ENCODE measurements at regions of chr11 and their contacts with region 1.

Region 1: DNA sequence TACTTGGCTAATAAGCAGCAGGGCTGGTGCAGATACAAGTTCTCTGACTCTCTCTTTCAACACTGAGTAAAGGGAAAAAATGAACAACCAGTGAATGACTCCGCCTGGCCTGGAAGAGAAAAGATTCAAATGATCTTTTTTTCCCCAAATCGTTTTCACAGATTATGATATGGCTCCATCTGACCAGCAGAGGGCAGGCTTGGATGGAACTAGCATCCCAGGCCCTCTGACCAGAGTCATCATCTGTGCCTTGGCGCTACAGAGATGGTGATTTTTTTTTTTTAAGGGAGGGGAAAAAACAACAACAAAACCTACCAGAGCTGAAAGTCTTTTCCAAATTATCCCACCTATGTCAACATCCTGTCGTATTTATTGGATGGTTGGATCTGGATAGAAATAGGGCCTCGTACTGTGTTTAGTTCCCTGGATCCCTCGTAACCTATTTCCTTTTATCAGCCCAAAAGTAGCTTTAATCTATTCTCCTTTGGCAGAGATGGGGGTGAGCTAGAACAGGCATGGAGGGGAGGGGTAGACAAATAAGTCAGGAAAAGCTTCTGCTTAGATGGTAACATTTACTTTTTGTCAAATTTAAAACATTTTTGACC is 69.7 kb downstream of the PRSS23 start:
- DNase-seq: no peak
- H3K4me3 ChIP-seq: no peak overlapping the region
- CTCF ChIP-seq: peak; percentile 76

Region 2: DNA sequence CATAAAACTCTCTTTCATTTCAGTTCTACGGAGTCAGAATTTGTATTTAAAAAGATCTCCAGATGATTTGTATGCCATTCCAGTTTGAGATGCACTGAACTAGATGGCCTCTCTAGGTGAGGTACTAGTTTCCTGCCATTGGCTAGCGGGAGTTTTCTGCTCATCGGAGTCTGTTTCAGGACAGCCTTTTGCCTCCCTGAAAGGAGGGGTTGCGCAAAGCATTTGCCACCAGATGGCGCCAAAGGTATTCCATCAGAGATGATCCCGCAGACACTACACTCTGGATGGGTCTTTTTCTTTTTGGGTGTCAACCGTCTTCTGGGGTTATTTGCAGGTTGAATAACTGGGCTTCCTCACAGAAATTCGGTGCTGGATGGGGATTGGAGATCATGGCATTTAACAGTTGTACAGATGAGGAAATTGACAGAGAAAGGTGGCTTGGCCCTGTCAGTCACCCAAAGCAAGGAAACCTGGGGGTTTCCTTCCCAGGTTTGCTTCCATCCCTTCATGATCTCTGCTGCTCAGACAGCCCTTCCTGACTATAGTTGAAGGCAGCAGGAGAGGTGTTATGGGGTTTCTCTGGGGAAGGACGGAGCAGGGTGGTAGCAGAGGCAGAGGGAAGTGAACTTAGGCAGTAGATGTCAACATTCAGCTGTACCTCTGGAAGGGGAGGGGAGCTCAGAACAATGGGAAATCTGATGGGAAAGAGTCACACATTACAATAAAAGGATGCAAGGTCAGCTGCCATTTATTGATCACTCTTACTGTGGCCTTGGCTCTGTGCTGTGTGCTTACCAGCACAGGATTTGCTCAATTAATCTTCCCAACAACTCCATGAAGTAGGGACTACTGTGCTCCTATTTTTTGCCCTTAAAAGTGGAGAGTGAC is 413.8 kb before region 1 on chr11:
- CTCF ChIA-PET with region 1: interaction called, 30 read pairs
- POLR2A ChIA-PET with region 1: no interaction called
- DNase-seq: no peak
- H3K4me3 ChIP-seq: no peak overlapping the region
- CTCF ChIP-seq: peak; percentile 83

Region 3: DNA sequence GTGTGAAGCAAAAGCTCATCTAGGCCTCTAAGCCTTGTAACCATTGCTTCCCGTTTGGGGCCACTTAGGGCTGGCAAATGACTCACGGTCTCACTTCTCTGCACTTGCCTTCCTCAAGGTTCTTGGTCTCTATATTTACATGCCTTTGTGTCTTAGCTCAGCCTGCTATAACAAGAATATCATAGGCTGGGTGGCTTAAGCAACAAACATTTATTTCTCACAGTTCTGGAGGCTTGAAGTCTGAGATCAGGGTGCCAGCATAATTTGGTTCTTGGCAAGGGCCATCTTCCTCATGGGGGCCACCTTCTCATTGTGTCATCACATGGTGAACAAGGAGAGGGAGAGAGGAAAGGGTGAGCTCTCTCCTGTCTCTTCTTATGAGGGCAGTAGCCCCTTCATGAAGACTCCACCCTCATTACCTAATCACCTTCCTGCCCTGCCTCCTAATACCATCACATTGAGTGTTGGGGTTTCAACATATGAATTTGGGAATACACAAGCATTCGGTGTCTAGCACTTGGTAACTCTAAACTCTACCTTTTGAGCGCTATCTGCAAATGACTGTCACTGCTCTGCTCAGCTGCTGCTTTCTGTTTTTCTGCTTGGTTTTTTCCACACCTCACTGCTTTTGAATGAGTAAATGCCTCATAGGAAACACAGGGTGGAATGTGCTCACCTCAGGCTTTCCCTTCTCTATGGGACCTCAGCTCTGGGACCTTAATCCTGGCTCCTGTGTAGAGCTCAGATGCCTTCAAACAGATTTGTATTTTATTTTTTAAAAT is 181.5 kb before region 1 on chr11:
- CTCF ChIA-PET with region 1: no interaction called
- POLR2A ChIA-PET with region 1: no interaction called
- DNase-seq: peak; percentile 84
- H3K4me3 ChIP-seq: no peak overlapping the region
- CTCF ChIP-seq: no peak

Region 4: GRCh38 chr11:86749376-86749775 is 120.7 kb before region 1 on chr11:
- CTCF ChIA-PET with region 1: no interaction called
- POLR2A ChIA-PET with region 1: no interaction called
- DNase-seq: no peak
- H3K4me3 ChIP-seq: no peak overlapping the region
- CTCF ChIP-seq: no peak

Region 5: DNA sequence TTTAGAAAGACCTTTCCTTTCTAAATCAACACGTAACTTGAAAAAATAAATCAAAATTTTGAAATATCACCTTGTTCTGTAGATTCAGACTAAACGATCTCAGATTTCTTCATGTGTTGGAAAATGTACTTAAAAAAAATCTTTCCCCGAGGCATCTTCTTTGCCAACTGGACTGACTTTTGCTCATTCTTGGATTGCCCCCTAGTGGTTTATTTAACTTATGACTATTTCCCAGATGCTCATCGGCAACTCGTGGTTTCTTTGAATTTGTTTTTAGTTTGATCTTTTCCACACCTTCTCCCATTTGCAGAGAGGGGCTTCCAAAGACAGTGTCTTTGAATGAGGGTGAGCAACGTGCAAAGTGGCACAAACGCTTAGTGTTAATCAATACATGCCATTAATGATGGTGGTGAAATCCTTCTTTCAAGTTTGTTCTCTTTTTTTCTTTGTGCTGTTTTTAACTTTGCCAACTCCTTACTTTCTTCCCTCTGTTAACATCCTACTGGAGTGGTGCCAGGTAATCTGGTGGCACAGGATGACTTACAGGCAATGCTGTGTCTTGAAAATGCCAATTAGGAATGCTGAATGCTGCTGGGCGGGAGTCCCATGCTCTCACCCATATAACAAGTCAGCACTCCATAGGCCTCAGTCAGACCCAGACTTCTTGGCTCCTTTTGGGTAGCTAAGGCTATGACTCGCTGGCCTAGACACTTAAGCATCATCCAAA is 51.4 kb before region 1 on chr11:
- CTCF ChIA-PET with region 1: no interaction called
- POLR2A ChIA-PET with region 1: no interaction called
- DNase-seq: peak; percentile 53
- H3K4me3 ChIP-seq: no peak overlapping the region
- CTCF ChIP-seq: peak; percentile 23

Region 6: DNA sequence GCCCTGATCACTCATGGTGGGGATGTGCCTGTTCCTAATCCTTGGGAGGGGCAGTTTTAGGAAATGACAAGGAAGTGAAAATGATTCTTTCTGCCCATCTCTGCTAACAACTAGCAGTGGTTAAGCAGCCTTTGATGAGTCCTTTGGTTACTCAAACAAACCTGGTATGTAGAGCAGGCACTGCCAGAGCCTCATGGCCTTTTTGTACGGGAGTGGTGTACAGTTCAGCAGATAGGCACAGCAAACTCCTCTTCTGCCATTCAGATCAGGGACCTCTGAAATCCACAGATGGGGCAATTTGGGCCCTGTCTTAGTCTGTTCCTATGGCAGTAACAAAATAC is 18.9 kb after region 1 on chr11:
- CTCF ChIA-PET with region 1: interaction called, 26 read pairs
- POLR2A ChIA-PET with region 1: no interaction called
- DNase-seq: no peak
- H3K4me3 ChIP-seq: no peak overlapping the region
- CTCF ChIP-seq: no peak

Region 7: DNA sequence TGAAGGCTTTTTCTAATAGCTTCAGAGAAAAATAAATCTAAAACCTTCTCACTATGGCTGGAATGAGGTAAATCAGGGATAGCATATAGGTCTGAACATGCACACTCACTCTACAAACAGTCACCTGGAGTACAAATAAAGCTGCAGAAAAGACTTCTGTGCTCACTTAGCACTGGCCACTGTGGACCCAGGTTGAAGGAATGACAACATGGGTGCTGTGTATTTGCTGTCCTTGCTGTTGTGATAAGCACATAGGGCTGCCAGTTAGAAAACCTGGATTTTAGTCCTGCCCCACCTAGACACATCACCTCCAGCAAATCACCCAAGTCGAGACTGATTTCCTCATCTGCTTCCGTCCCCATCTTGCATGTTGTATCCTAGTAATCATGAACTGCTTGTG is 33.9 kb after region 1 on chr11:
- CTCF ChIA-PET with region 1: interaction called, 47 read pairs
- POLR2A ChIA-PET with region 1: no interaction called
- DNase-seq: no peak
- H3K4me3 ChIP-seq: no peak overlapping the region
- CTCF ChIP-seq: no peak

Region 8: DNA sequence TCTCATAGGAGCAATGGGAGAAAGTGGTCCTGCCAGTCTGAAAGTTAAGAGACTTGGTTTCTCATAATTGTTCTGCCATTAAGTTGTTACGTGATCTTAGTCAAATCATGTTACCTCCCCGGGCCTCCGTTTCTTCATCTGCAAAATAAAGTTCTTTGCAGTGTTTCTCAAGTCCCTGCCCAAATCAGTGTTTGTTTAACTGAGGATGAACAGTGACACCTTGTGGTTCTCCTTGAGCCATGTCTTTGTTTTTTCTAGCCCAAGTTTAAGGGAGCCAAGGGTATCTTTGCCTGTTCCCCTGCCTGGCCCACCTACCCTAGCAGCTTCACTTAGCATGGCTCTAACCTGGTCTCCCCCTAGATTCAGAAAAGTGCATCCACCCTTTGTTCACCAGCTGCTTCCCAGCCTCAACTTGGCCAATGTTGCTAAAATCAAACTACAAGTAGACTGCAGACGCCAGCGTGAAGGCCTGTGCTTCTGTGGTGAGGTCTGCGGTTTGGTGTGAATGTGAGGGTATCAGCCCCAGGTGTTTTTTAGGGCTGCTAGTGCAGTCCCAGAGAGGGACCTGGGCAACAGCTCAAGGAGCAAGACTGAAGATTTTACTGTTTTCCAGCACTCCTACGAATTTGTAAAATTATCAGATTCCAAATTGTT is 49.6 kb after region 1 on chr11:
- CTCF ChIA-PET with region 1: interaction called, 397 read pairs
- POLR2A ChIA-PET with region 1: no interaction called
- DNase-seq: no peak
- H3K4me3 ChIP-seq: no peak overlapping the region
- CTCF ChIP-seq: peak; percentile 66

Region 9: DNA sequence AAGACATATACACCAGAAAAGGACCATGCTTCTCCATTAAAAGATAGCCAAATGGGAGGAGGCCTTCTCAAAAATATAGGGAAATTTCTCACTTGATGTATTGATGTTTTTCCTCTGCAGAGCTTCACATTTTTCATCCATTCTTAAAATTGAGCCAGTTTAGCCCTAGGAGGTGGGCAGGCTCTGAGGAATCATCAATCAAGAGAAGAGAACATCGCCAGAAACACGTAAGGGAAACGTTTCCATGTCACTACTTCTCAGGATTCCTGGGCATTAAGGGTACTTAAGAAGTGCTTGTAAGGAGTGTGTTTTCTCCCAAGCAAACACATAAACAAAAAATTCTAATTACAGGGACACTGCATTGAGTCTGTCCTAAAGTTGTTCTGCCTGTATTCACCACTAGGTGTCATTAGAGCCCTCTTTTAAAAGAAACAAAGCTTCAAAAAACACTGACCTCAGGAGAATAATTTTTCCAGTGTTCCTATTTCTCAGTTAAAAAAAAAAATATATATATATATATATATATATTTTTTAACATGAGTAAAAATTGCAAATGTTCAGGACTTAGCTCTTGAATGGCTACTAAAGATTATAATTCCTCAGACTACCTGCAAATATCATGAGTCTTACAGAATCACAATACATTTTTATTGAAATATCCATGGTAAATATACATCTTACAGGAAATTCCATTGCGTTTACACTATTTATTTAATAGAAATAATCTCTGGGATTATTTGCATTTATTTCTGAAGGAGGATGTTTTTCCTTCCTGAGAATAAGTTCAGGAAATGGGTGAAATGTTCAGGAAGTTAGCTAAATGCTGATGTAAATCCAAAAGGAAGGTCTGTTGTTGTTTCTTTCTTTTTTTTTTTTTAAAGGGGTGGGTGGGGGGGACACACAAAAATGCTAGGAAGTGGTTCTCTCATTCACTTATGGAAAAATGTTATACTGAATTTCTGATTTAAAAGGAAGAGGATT is 69.1 kb after region 1 on chr11:
- CTCF ChIA-PET with region 1: interaction called, 23 read pairs
- POLR2A ChIA-PET with region 1: no interaction called
- DNase-seq: no peak
- H3K4me3 ChIP-seq: no peak overlapping the region
- CTCF ChIP-seq: peak; percentile 58

Region 10: GRCh38 chr11:87281496-87281895 is 411.4 kb after region 1 on chr11:
- CTCF ChIA-PET with region 1: no interaction called
- POLR2A ChIA-PET with region 1: no interaction called
- DNase-seq: no peak
- H3K4me3 ChIP-seq: no peak overlapping the region
- CTCF ChIP-seq: no peak